Posterior vena cava (tissue), 2 donors: ENCODE measurements at regions of chr7 and their contacts with region 1.

Region 1: GRCh38 chr7:25093268-25093826 is 31.7 kb downstream of the CYCS start:
- DNase-seq: peak; percentile 92

Region 2: GRCh38 chr7:24851786-24852185 is 241.6 kb before region 1 on chr7:
- intact Hi-C with region 1: no loop called
- DNase-seq: no peak

Region 3: GRCh38 chr7:25119102-25119501 is 25.8 kb after region 1 on chr7:
- intact Hi-C with region 1: loop called in 1 of 2 experiments (anchors 1 kb)
- DNase-seq: no peak

Region 4: GRCh38 chr7:25359471-25360059 is 266.2 kb after region 1 on chr7:
- intact Hi-C with region 1: no loop called
- DNase-seq: no peak